Activated naive CD4-positive, alpha-beta T cell treated with anti-CD3 and anti-CD28 coated beads, Interleukin-2, amount 10 ng/mL, durations not matched to agents 7 days and 5 days (primary cell): ENCODE measurements at regions of chr13 and their contacts with region 1.

Region 1: GRCh38 chr13:24625870-24626849 is 54.0 kb upstream of the ATP12A start:
- DNase-seq: peak; percentile 64
- H3K4me3 Mint-ChIP-seq: no peak overlapping the region
- H3K27ac Mint-ChIP-seq: peak overlapping the region; percentile 98
- H3K4me1 Mint-ChIP-seq: peaks cover 56% of the 10 kb centered on the region
- H3K27me3 Mint-ChIP-seq: no peaks in the 10 kb centered on the region

Region 2: GRCh38 chr13:24605923-24606372 is 20.2 kb before region 1 on chr13:
- CTCF ChIA-PET with region 1: interaction called, 13 read pairs
- DNase-seq: no peak
- H3K4me3 Mint-ChIP-seq: no peak overlapping the region
- H3K27ac Mint-ChIP-seq: peak overlapping the region; percentile 13
- H3K4me1 Mint-ChIP-seq: peaks cover 5% of the 10 kb centered on the region
- H3K27me3 Mint-ChIP-seq: no peaks in the 10 kb centered on the region